ENCODE measurements at regions of chr15 and their contacts with region 1.

Region 1: DNA sequence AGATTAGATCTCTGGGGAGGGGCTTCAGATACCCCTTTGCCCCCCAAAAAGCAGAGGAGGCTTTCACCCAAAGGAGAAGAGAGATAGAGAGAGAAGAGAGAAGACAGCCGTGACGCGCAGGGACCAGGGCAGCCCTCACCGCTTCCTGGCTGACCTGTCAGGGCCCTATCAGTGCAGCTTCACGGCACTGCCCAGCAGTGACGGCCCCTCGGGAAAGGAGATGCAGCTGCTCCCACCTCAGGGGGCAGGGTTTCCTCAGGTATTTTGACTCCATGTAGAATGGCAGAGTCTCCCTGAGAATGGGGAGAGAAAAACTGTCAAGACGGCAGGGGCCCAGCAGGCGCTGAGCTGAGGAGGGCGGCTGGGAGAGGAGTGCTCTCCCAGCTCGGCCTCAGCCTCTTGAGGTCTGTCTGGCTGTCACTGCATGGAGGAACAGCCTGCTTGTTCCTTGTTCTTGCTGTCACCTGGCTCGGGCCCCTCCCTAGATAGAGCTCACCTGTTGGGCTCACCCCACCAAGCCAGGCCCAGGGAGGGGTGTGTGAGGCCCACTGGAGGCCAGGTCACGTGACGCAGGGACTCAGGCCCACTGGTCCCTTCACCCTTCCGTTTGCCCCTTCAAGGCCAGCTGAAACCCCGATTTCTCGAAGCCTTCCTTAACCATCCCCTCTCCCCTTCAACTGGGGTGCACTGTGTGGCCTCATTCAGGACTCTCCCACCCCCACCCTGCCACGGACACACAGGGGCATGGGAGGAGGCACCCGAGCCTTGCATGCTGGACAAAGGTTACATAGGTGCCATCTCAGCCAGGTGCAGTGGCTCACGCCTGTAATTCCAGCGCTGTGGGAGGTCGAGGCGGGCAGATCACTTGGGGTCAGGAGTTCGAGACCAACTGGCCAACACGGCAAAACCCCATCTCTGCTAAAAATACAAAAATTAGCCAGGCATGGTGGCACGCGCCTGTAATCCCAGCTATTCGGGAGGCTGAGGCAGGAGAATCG is 28.2 kb downstream of the LOXL1 start:
- DNase-seq: peak; percentile 50
- ATAC-seq: no peak

Region 2: DNA sequence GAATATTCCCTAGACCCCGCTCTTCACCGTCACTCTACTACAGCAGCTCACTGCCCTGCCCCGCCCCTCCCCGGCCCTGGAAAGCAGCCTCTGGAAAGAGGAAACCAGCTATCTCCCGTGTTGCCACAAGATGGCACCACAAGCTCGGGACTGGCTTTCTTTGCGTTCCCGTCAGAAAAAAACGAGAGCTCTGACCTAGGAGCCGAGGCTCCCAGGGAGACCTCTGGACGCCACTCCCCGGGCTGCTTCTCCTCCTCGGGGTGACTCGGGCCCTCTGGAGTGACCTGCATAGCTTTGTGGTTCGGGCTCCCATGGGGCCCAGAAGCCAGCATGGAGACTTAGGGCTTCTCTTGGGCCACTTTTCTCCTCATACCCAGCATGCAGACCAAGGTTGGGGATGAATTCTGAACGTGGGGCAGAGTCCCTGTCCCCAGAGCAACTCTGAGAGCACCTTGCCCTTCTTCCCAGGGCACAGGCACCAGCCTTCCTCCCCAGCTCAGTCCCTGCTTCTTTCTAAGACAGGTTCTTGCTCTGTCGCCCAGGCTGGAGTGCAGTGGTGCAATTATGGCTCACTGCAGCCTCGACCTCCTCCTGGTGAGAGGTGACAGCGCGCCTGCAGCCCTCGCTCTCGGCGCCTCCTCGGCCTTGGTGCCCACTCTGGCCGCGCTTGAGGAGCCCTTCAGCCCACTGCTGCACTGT is 18.6 kb after region 1 on chr15:
- intact Hi-C with region 1: loop called (anchors 1 kb)
- DNase-seq: peak; percentile 92
- ATAC-seq: peak; percentile 91

Measured in sciatic nerve (tissue), 2 donors.